HEK293 (cell line): ENCODE measurements at regions of chr11 and their contacts with region 1.

Region 1: DNA sequence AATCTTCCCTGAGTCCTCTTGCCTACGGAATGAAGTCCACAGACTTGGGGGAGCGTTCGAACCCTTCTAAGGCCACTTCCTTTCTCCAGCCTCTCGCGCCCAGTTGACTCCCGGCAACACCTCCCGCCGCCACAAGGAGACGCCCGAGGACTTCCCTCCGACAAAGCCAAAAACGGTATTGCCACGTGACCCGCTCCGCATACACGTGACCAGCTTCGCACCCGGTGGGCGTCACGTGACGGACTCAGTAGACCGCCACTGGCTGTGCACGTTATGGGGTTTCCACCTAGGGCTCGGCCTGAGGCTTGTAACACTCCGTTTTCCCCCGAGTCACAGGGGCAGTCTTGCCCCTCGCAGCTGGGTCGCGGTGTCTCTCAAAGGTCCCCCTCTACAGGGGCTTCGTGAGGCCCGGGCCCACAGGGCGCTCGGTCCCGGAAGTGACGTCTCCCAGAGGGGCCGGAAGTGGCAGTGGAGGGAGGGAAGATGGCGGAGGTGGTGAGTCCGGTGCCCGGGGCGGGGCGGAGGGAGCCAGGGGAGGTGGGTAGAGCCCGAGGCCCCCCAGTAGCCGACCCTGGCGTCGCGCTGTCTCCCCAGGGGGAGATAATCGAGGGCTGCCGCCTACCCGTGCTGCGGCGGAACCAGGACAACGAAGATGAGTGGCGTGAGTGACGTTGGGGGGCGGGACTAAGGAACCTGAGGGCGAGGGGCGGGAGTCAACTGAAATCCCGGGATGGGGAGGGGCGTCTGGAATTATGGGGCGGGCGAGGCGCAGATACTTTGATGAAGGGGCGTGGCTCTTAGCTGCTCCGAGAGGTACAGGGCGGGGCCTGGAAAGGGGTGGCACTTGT is at the start of gene KAT5:
- H3K4me3 ChIP-seq: peak within 1 kb of the TSS; percentile 55
- H3K27ac ChIP-seq: peak within 1 kb of the TSS; percentile 60
- H3K4me1 ChIP-seq: no peaks in the 10 kb centered on the region
- CTCF ChIP-seq: peak; percentile 91

Region 2: DNA sequence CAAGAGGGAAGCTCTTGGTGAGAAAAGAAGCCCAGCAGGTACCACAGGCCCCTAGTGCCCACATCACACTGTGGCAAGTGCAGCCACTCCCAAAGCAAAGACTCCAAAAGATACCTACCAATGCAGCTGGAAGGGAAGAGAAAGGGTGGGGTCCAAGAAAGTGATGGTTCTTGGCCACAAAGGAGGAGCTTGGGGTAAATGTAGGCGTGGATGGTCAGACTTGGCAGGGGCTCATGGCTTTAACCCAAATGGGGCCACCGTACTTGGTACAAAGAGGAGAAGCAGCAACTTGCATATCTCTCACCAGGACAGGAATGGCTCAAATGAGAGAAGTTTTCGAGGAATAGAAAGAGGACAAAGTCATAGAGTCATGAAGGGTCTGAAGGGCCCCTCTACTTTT is 102.8 kb before region 1 on chr11:
- CTCF ChIA-PET with region 1: no interaction called
- POLR2A ChIA-PET with region 1: no interaction called
- H3K4me3 ChIP-seq: no peak overlapping the region
- H3K27ac ChIP-seq: no peak overlapping the region
- H3K4me1 ChIP-seq: no peaks in the 10 kb centered on the region
- CTCF ChIP-seq: no peak

Region 3: GRCh38 chr11:65662799-65663638 is 49.0 kb before region 1 on chr11 and contains the start of gene RELA:
- CTCF ChIA-PET with region 1: interaction called, 6 read pairs
- POLR2A ChIA-PET with region 1: interaction called, 11 read pairs
- H3K4me3 ChIP-seq: peak within 1 kb of the TSS; percentile 82
- H3K27ac ChIP-seq: peak within 1 kb of the TSS; percentile 93
- H3K4me1 ChIP-seq: no peaks in the 10 kb centered on the region
- CTCF ChIP-seq: no peak

Region 4: DNA sequence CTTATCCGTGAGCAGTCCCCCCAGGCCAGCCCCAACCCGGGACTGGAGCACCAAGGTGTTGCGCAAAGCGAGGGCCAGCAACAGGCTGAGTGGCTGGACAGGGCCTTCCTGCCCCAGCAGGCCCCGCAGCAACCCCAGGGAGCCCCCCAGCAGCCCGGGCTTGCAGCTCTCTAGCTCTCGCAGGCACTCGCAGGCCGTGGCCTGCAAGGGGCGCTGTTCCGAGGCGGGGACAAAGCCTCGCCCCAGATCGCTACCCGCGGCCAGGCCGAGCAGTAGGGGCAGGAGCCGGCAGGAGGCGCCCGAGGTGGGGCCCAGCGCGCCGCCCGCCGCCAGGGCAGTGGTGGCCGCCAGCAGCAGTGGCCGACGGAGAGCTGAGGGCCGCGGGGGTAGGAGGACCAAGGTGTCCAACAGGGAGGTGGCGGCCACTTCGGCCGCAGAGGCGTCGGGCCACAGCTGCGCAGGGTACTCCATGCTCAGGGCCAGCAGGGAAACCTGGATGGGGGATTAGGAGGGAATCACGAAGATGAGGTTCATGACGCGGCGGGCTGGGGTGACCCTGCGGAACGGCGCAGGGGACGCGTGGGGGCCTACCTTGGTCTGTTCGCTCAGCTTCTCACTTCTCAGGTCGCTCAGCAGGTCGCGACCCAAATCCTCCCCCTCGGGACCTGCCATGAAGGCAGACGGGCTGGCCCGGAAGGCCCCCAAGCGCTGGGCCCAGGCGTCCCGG is 68.0 kb after region 1 on chr11:
- CTCF ChIA-PET with region 1: interaction called, 15 read pairs
- POLR2A ChIA-PET with region 1: interaction called, 6 read pairs
- H3K4me3 ChIP-seq: peak overlapping the region; percentile 76
- H3K27ac ChIP-seq: peak overlapping the region; percentile 90
- H3K4me1 ChIP-seq: no peaks in the 10 kb centered on the region
- CTCF ChIP-seq: peak; percentile 47; the same call in 1 of the 2 replicates

Region 5: GRCh38 chr11:65810046-65810868 is 98.2 kb after region 1 on chr11:
- CTCF ChIA-PET with region 1: interaction called, 41 read pairs
- POLR2A ChIA-PET with region 1: interaction called, 7 read pairs
- H3K4me3 ChIP-seq: no peak overlapping the region
- H3K27ac ChIP-seq: no peak overlapping the region
- H3K4me1 ChIP-seq: no peaks in the 10 kb centered on the region
- CTCF ChIP-seq: peak; percentile 76

Region 6: DNA sequence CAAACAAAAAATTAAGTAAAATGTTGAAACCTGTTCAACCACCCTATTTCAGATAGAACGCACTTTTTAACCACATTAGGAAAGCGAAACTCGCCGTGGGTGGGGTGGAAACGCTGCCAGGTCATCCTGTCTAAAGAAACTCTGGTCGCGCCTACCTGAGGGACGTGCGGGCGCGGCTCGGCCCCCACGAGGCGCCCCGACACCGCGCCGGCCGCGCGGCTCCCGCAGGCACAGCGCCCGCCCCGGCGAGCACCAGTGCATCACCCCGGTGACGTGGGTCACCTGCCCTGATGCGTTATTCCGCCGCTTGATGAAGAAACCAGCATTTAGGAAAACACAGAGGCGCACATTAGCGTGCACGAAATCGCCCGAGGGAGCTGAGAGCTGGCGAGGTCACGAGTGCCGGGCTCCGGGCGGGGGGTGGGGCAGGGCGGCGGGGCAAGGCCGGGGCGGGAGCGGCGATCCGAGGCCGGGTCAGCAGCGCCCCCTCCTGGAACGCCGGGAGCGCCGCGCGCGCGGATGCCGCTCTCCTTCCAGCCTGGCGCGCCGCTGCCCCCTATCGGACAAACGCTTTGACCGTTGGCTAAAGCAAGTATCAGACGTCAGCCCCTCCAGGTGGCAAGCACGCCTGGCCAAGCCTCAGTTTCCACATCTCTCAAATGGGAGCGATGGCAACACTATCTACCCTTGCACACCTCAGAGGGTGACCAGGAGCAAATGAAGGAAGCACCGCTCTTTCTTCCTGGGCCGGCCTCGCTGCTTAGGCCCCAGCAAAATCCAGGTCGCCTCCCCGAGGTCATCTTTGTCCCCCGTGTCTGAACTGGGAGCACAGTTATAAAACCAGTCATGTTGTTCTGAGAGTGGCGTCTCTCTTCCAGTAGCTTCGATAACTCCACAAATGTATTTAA is 106.1 kb after region 1 on chr11:
- CTCF ChIA-PET with region 1: interaction called, 41 read pairs
- POLR2A ChIA-PET with region 1: interaction called, 10 read pairs
- H3K4me3 ChIP-seq: peak overlapping the region; percentile 66
- H3K27ac ChIP-seq: peak overlapping the region; percentile 45; the same call in 1 of the 2 replicates
- H3K4me1 ChIP-seq: no peaks in the 10 kb centered on the region; the same call in 1 of the 2 replicates
- CTCF ChIP-seq: peak; percentile 92

Region 7: DNA sequence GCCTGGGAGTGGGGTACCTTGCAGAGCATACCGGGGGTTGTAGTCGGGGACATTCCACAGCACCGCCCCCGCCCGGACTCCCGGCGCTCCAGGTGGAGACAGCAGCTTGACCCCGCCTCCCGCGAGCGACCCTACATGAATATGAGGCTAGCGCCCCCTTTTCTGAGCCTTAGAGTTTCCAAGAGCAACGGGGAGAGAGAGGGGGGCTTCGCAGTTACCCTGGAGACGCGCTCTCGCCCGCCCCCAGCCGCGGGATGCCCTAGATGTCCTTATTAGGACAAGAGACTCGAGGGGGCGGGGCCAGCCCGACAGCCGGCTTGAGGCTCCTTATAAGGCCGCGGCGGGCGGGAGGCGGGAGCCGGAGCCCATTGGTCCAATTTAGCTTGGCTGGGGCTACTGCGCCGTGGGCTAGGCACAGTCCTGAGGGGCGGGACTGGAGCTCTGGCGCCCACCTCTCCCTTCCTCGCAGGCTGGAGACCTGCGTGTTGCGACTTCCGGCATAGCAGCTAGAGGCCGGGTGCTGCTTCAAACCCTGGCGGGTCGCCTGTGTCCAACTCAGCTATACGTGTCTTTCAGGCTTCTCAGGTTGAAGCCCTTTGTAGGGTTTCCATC is 147.3 kb after region 1 on chr11:
- CTCF ChIA-PET with region 1: interaction called, 16 read pairs
- POLR2A ChIA-PET with region 1: interaction called, 21 read pairs
- H3K4me3 ChIP-seq: peak overlapping the region; percentile 94
- H3K27ac ChIP-seq: peak overlapping the region; percentile 92
- H3K4me1 ChIP-seq: peaks cover 4% of the 10 kb centered on the region; the same call in 1 of the 2 replicates
- CTCF ChIP-seq: peak; percentile 69; the same call in 1 of the 2 replicates

Region 8: GRCh38 chr11:65988791-65989592 is 277.0 kb after region 1 on chr11:
- CTCF ChIA-PET with region 1: interaction called, 10 read pairs
- POLR2A ChIA-PET with region 1: no interaction called
- H3K4me3 ChIP-seq: no peak overlapping the region
- H3K27ac ChIP-seq: no peak overlapping the region
- H3K4me1 ChIP-seq: no peaks in the 10 kb centered on the region
- CTCF ChIP-seq: peak; percentile 94